ENCODE measurements at regions of chr16 and their contacts with region 1.

Region 1: DNA sequence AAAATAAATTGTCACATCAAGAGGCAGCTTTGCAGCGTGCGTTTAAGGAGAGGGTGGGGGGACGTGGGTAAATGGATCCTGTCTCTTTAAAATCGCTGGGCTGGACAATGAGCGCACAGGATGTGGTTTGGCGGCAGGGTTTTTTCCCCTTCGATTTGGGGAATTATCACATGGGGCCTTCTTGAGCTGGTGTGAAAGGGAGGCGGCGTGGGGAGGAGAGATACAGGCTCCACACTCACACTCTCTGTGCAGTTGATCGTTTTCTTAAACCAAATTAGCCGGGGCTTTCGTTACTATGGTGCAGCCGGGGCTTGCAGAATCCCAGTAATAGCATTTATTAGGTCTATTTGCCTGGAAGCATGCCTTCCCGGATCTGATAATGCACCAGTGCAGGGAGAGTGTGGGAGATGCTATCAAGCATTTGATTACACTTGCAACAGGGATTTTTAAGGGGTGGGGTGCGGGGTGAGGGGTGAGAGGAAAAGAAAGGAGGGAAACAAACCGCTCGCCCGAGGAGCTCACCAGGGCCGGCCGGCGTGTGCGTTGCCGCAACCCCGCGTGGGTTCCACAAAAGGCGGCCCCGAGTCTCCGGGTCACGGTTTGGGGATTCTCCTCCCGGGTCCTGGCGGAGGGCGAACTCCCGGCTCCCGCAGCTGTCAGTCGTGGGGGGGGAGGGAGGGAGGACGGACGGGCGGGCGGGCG is 58.9 kb upstream of the GSE1 start:
- DNase-seq: no peak
- ATAC-seq: peak; percentile 4; the same call in 1 of the 2 replicates
- H3K4me3 Mint-ChIP-seq: peak overlapping the region; percentile 89
- H3K27ac Mint-ChIP-seq: peak overlapping the region; percentile 85
- H3K4me1 Mint-ChIP-seq: peaks cover 44% of the 10 kb centered on the region
- H3K27me3 Mint-ChIP-seq: peaks cover 8% of the 10 kb centered on the region
- CTCF ChIP-seq: no peak

Region 2: DNA sequence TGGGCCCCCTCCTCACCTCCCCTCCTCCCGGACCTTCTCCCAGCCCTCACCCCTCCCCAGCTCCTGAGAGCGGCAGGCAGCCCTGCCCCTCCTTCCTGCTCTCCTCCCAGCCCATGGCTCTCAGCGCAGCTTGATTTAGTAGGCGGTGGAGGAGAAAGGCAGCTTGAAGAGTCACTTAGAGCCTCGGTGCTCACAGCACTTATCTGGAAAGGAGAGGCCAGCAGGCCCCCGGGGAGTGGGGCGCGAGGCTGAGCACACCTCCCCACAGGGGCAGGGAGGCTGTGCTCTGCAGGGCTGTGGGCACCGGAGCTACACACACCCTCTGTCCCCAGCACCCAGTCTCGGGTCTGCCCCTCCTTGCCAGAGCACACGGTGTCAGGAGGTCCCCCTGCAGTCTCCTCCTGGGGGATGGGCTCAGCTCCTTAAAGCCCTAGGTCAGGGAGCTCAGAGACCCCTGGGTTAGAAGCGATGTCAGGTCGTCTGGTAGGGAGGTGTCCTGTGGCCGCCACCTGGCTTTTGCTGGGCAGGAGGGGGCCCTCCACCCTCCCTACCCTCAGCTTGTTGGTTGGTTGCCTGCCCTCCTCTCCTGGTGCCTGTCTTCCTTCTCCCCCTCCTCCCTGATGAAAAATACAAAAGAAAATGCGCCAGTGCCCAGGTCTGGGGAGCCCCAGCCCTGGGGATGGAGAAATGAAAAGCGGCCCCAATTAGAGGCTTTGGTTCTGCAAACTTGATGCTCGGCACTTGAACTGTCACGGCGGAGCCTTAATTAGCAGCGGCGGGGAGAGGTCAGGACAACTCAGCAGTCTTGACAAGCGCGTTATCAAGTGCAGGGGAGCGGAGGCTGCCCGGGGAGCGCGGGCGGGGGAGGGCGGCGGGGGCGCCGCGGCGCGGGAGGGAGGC is 92.2 kb before region 1 on chr16:
- CTCF ChIA-PET with region 1: interaction called, 10 read pairs
- POLR2A ChIA-PET with region 1: interaction called, 3 read pairs
- DNase-seq: peak; percentile 73
- ATAC-seq: peak; percentile 77
- H3K4me3 Mint-ChIP-seq: peak overlapping the region; percentile 76
- H3K27ac Mint-ChIP-seq: no peak overlapping the region
- H3K4me1 Mint-ChIP-seq: peaks cover 32% of the 10 kb centered on the region
- H3K27me3 Mint-ChIP-seq: peaks cover 60% of the 10 kb centered on the region
- CTCF ChIP-seq: no peak

Region 3: GRCh38 chr16:85528528-85529387 is 25.5 kb before region 1 on chr16:
- CTCF ChIA-PET with region 1: interaction called, 36 read pairs
- POLR2A ChIA-PET with region 1: interaction called, 3 read pairs
- DNase-seq: no peak
- ATAC-seq: no peak
- H3K4me3 Mint-ChIP-seq: no peak overlapping the region
- H3K27ac Mint-ChIP-seq: peak overlapping the region; percentile 53; the same call in 1 of the 2 replicates
- H3K4me1 Mint-ChIP-seq: peaks cover 32% of the 10 kb centered on the region
- H3K27me3 Mint-ChIP-seq: no peaks in the 10 kb centered on the region
- CTCF ChIP-seq: peak; percentile 38; the same call in 1 of the 2 replicates

Region 4: GRCh38 chr16:85569615-85570212 is 15.5 kb after region 1 on chr16:
- CTCF ChIA-PET with region 1: interaction called, 60 read pairs
- POLR2A ChIA-PET with region 1: interaction called, 3 read pairs
- DNase-seq: no peak
- ATAC-seq: peak; percentile 63
- H3K4me3 Mint-ChIP-seq: no peak overlapping the region
- H3K27ac Mint-ChIP-seq: peak overlapping the region; percentile 95
- H3K4me1 Mint-ChIP-seq: peaks cover 78% of the 10 kb centered on the region
- H3K27me3 Mint-ChIP-seq: no peaks in the 10 kb centered on the region
- CTCF ChIP-seq: no peak

Region 5: GRCh38 chr16:85610508-85611332 is 56.5 kb after region 1 on chr16:
- CTCF ChIA-PET with region 1: interaction called, 160 read pairs
- POLR2A ChIA-PET with region 1: interaction called, 20 read pairs
- DNase-seq: peak; percentile 94
- ATAC-seq: peak; percentile 40
- H3K4me3 Mint-ChIP-seq: peak overlapping the region; percentile 68
- H3K27ac Mint-ChIP-seq: peak overlapping the region; percentile 97
- H3K4me1 Mint-ChIP-seq: peaks cover 49% of the 10 kb centered on the region
- H3K27me3 Mint-ChIP-seq: peaks cover 17% of the 10 kb centered on the region
- CTCF ChIP-seq: peak; percentile 96

Measured in WTC11 (cell line).